BJ (cell line): ENCODE measurements at regions of chr2 and their contacts with region 1.

Region 1: GRCh38 chr2:238358769-238359168 is 38.5 kb downstream of the TRAF3IP1 start:
- DNase-seq: no peak
- H3K4me3 ChIP-seq: no peak overlapping the region
- H3K27me3 ChIP-seq: no peaks in the 10 kb centered on the region
- CTCF ChIP-seq: no peak

Region 2: GRCh38 chr2:238346544-238346943 is 12.2 kb before region 1 on chr2:
- CTCF ChIA-PET with region 1: interaction called, 33 read pairs
- POLR2A ChIA-PET with region 1: no interaction called
- DNase-seq: no peak
- H3K4me3 ChIP-seq: no peak overlapping the region
- H3K27me3 ChIP-seq: no peaks in the 10 kb centered on the region
- CTCF ChIP-seq: no peak

Region 3: GRCh38 chr2:238449909-238450417 is 91.2 kb after region 1 on chr2:
- CTCF ChIA-PET with region 1: interaction called, 10 read pairs
- POLR2A ChIA-PET with region 1: no interaction called
- DNase-seq: no peak
- H3K4me3 ChIP-seq: no peak overlapping the region
- H3K27me3 ChIP-seq: no peaks in the 10 kb centered on the region
- CTCF ChIP-seq: no peak